ENCODE measurements at regions of chr6 and their contacts with region 1.

Region 1: DNA sequence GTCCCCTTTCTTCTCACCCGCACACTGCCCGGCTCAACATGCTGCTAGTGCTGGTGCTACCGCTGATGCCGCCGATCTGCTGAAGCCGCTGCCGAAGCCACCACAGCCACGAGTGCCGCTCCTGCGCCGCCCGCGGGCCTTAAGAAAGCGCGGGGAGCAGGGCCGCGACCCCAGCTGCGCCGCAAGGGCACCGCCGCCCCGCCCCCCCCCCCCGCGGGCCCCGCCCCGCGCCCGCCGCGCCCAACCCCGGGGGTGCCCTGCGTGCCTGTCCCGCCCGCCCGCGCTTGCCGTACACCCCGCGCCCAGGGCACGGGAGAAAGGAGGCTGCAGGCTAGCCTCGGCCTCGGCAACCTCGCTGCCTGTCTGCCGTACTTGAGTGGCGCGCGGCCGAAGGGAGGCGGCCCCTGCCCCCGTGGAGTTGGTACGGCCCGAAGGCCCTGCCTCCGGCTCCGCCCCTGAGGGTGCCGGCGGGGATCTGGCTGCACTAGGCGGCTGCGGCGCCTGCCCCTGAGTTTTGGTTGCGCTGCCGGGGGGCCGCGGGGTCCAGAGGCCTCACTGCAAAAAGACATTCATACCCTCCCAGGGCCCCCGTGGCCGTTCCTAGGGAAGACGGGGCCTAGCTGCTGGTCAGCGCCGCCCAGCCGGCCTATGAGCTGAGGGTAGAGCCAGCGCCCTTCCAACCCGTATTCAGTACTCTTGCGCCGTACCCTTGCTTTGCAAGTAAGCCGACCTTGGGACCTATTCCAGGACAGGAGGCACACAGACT is at the start of gene SOD2:
- DNase-seq: peak; percentile 87 to 96 (median 93)
- H3K4me3 ChIP-seq: peak within 1 kb of the TSS; percentile 41 to 94 (median 84)
- H3K27ac ChIP-seq: peak within 1 kb of the TSS; percentile 95 to 98 (median 97)
- H3K4me1 ChIP-seq: peaks cover 34 to 47% of the 10 kb centered on the region in 2 donors
- H3K27me3 ChIP-seq: no peaks in the 10 kb centered on the region
- CTCF ChIP-seq: peak in 1 of 6 experiments; percentile 1
- POLR2A ChIP-seq: peak; percentile 80 to 86
- total RNA-seq, gene SOD2: 172 to 3,032 (median 451) TPM

Region 2: DNA sequence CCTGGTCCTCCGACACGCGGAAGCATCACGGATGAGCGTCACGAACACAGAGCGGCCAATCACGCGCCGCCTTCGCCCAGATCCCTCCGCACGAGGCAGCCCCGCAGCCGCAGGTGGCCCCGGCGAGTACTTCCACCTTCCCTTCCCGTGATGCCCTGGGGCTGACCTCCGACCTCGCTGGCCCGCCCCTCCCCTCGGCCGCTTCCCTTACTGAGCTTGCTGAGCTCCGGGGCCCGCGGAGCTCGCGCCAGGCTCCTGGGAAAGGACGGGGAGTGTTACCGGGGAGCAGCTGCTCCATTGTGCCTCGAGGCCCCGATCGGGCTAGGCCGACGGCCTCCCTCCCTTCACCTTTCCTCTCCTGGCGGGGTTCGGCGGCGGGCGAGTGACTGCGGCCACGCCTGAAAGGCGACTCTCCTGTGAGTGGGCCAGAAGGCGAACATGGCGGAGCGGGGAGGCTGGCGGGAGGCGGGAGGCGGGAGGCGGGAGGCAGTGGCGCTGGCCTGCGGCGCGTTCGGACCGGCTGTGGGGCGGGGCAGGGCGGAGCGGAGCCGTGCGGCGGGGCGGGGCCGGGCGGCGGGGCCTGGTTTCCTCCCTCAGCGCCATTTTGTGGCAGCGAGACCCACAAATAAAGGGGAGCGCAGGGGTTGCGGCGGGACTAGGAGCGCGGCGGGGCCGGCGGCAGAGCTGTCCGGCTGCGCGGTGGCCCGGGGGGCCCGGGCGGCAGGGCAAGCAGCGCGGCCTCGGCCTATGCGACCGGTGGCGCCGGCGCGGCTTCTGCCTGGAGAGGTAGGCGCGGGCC is 33.8 kb after region 1 on chr6 and contains the start of gene WTAP:
- intact Hi-C with region 1: loop called in 1 of 2 experiments (anchors 5 kb)
- DNase-seq: peak; percentile 96 to 98 (median 97)
- H3K4me3 ChIP-seq: peak within 1 kb of the TSS; percentile 41 to 100 (median 76)
- H3K27ac ChIP-seq: peak within 1 kb of the TSS; percentile 97 to 100 (median 99)
- H3K4me1 ChIP-seq: peaks cover 26 to 51% of the 10 kb centered on the region in 2 donors
- H3K27me3 ChIP-seq: no peaks in the 10 kb centered on the region
- CTCF ChIP-seq: no peak
- POLR2A ChIP-seq: peak; percentile 83 to 86
- total RNA-seq, gene WTAP: 78.9 to 145 (median 89.2) TPM

Region 3: DNA sequence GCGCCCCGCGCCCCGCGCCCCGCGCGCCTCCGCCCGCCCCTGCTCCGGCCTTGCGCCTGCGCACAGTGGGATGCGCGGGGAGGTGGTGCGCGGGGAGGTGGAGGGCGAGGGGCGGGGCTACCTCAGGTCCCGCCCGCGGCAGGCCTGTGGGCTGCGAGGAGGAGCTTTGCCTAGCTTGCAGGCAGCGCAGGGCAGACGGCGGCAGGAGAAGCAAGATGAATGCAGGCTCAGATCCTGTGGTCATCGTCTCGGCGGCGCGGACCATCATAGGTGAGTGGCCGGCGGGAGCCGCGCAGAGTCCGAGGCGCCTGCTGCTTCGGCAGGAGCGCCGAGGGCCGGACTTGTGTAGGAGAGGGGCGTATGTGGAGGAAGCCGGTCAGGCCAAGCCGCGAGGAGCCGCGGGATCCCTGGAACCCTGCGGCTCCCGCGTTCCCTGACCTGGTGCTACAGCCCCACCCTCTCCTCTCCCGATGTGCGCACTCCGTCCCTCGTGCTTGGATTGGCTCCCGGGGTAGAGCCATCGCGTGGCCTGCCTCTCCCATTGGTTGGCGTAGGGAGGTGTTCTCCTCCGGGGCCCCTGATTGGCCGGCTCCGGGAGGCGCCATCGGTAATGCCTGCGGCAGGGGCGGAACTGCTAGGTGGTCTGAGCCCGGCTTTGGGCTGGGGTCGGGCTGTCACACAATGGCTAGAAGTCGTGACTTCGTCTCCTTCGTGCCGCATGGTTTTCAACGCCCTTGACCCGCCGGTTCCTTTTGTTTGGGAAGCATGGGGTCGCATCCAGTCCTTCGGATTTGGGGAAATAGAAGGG is 68.8 kb after region 1 on chr6 and contains the start of gene ACAT2:
- intact Hi-C with region 1: loop called in 1 of 2 experiments (anchors 10 kb)
- DNase-seq: peak; percentile 95 to 98 (median 97)
- H3K4me3 ChIP-seq: peak within 1 kb of the TSS; percentile 30 to 91 (median 74)
- H3K27ac ChIP-seq: peak within 1 kb of the TSS; percentile 99 to 100 (median 99)
- H3K4me1 ChIP-seq: peaks cover 6 to 24% of the 10 kb centered on the region in 2 donors
- H3K27me3 ChIP-seq: no peaks in the 10 kb centered on the region
- CTCF ChIP-seq: peak in 4 of 6 experiments; percentile 9 to 48 (median 34)
- POLR2A ChIP-seq: peak in 1 of 2 donors; percentile 70
- total RNA-seq, gene ACAT2: 8.7 to 272 (median 19.0) TPM

Region 4: GRCh38 chr6:160013987-160014868 is 320.9 kb after region 1 on chr6:
- intact Hi-C with region 1: no loop called
- DNase-seq: no peak
- H3K4me3 ChIP-seq: no peak overlapping the region
- H3K27ac ChIP-seq: no peak overlapping the region
- H3K4me1 ChIP-seq: peaks cover 0 to 8% of the 10 kb centered on the region in 2 donors
- H3K27me3 ChIP-seq: no peaks in the 10 kb centered on the region
- CTCF ChIP-seq: no peak
- POLR2A ChIP-seq: no peak